ENCODE measurements at regions of chr7 and their contacts with region 1.

Region 1: GRCh38 chr7:135170274-135170997 is at the start of gene CYREN:
- DNase-seq: no peak
- H3K4me3 ChIP-seq: peak within 1 kb of the TSS; percentile 82
- H3K27me3 ChIP-seq: no peaks in the 10 kb centered on the region
- CTCF ChIP-seq: peak; percentile 67
- polyA plus RNA-seq, gene CYREN: 35.4 and 39.4 TPM in 2 replicates

Region 2: DNA sequence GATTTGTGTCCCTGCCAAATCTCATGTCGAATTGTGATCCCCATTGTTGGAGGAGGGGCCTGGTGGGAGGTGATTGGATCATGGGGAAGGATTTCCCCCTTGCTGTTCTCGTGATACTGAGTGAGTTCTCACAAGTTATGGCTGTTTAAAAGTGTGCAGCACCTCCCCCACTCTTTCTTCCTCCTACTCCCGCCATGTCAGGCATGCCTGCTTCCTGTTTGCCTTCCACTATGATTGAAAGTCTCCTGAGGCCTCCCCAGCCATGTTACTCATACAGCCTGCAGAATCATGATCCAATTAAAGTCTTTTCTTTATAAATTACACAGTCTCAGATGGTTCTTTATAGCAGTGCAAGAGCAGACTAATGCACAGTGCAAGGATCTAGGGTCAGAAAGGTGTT is 315.6 kb before region 1 on chr7:
- CTCF ChIA-PET with region 1: no interaction called
- POLR2A ChIA-PET with region 1: no interaction called
- DNase-seq: no peak
- H3K4me3 ChIP-seq: no peak overlapping the region
- H3K27me3 ChIP-seq: no peaks in the 10 kb centered on the region
- CTCF ChIP-seq: no peak

Region 3: GRCh38 chr7:134986363-134987251 is 183.8 kb before region 1 on chr7 and contains the start of gene AGBL3:
- CTCF ChIA-PET with region 1: interaction called, 17 read pairs
- POLR2A ChIA-PET with region 1: no interaction called
- DNase-seq: peak; percentile 86
- H3K4me3 ChIP-seq: peak within 1 kb of the TSS; percentile 57
- H3K27me3 ChIP-seq: no peaks in the 10 kb centered on the region
- CTCF ChIP-seq: peak; percentile 79
- polyA plus RNA-seq, gene AGBL3: 0.32 and 0.80 TPM in 2 replicates

Region 4: DNA sequence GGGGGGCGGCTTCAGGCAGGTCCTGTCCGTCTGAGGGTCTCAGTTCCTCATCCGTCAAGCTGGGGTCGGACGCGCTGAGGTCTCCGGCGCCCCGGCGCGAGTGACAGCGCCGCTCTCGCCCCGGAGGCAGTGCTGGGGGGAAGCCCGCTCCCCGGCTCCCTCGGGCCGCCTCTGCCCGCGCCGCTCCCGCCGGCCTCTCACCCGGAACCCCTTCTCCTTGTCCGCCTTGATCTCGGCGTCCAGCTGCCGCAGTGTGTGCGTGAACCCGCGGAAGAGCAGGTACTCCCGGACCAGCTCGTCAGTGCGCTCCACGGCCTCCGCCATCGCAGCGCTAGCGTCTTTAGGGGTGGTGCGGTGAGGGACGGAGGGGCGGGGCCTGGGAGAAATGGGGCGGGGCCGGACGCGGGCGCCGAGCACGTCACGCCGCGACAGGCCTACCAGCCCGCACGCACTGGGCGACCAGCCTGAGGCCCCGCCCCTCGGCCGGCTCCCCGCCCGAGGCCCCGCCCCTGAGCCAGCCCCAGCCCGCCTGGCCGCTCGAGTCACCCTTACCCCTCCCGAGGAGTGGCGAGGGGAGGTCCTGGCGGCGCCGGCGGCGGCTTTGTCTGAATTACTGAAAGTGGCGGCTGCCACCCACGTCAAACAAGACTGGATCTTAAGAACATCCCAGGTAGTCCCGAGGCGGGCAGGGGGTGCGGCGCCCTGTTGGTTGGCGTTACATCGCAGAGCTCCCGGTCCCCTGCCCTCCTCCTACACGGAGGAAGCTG is 40.9 kb after region 1 on chr7 and contains the start of gene WDR91:
- CTCF ChIA-PET with region 1: interaction called, 12 read pairs
- POLR2A ChIA-PET with region 1: no interaction called
- DNase-seq: peak; percentile 56
- H3K4me3 ChIP-seq: peak within 1 kb of the TSS; percentile 74
- H3K27me3 ChIP-seq: no peaks in the 10 kb centered on the region
- CTCF ChIP-seq: peak; percentile 12; the same call in 1 of the 2 replicates
- polyA plus RNA-seq, gene WDR91: 10.9 and 14.2 TPM in 2 replicates

Measured in BJ (cell line).